ENCODE measurements at regions of chr10 and their contacts with region 1.

Region 1: DNA sequence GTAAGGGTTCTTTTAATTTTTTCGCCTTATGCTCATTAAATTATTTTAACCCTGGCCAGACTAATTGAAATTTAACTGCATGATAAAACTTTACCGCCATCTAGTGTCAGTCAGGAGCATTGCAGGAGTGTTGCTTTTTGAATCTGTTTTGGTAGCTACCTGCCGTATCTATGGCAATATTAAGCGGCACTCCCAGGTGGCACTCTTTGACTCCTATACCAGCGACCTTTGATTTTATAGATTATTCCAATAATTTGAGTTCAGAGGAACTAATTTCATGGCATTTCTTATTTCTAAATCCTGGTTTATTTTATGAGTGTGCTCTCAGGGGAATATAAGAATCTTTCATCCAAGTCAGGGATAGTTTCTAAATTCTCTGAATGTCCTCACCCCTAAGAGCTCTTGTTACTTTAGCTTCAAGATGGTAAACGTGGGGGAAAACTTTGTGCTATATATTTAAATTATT is 198.9 kb downstream of the REEP3 start:
- DNase-seq: peak; percentile 65
- ATAC-seq: peak; percentile 62
- H3K4me3 Mint-ChIP-seq: peak overlapping the region; percentile 12
- H3K27ac Mint-ChIP-seq: no peak overlapping the region
- H3K4me1 Mint-ChIP-seq: peaks cover 16% of the 10 kb centered on the region
- H3K27me3 Mint-ChIP-seq: peaks cover 3% of the 10 kb centered on the region

Region 2: GRCh38 chr10:63157845-63158624 is 562.1 kb before region 1 on chr10:
- CTCF ChIA-PET with region 1: interaction called, 234 read pairs
- POLR2A ChIA-PET with region 1: no interaction called
- DNase-seq: peak; percentile 67
- ATAC-seq: peak; percentile 78
- H3K4me3 Mint-ChIP-seq: no peak overlapping the region
- H3K27ac Mint-ChIP-seq: no peak overlapping the region
- H3K4me1 Mint-ChIP-seq: peaks cover 10% of the 10 kb centered on the region
- H3K27me3 Mint-ChIP-seq: no peaks in the 10 kb centered on the region

Region 3: GRCh38 chr10:63173468-63174232 is 546.5 kb before region 1 on chr10:
- CTCF ChIA-PET with region 1: interaction called, 234 read pairs
- POLR2A ChIA-PET with region 1: no interaction called
- DNase-seq: no peak
- ATAC-seq: peak; percentile 95
- H3K4me3 Mint-ChIP-seq: peak overlapping the region; percentile 43
- H3K27ac Mint-ChIP-seq: peak overlapping the region; percentile 88
- H3K4me1 Mint-ChIP-seq: peaks cover 77% of the 10 kb centered on the region
- H3K27me3 Mint-ChIP-seq: no peaks in the 10 kb centered on the region

Region 4: DNA sequence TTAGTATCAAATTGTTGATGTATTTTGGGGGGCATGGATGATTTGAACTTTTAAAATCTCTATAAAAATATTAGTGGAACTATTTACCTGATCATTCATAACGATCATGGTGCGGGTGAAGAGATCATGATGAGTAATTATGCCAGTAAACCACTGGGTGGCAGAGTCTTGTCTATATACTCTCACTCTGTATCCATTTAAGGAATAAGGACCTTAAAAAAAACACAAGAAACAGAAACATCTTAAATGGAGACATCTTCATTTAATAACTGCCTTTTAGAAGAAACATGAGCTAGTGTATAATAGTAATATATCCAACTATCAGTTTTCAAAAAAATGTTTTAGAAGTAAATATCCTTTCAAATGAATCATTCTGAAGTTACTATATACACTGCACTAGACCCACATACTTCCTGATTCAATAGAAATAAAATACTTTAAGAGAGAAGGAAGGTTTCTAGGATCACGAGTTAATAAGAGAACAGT is 502.9 kb before region 1 on chr10:
- CTCF ChIA-PET with region 1: interaction called, 18 read pairs
- POLR2A ChIA-PET with region 1: no interaction called
- DNase-seq: peak; percentile 46
- ATAC-seq: peak; percentile 81
- H3K4me3 Mint-ChIP-seq: no peak overlapping the region
- H3K27ac Mint-ChIP-seq: no peak overlapping the region
- H3K4me1 Mint-ChIP-seq: peaks cover 45% of the 10 kb centered on the region
- H3K27me3 Mint-ChIP-seq: no peaks in the 10 kb centered on the region

Region 5: DNA sequence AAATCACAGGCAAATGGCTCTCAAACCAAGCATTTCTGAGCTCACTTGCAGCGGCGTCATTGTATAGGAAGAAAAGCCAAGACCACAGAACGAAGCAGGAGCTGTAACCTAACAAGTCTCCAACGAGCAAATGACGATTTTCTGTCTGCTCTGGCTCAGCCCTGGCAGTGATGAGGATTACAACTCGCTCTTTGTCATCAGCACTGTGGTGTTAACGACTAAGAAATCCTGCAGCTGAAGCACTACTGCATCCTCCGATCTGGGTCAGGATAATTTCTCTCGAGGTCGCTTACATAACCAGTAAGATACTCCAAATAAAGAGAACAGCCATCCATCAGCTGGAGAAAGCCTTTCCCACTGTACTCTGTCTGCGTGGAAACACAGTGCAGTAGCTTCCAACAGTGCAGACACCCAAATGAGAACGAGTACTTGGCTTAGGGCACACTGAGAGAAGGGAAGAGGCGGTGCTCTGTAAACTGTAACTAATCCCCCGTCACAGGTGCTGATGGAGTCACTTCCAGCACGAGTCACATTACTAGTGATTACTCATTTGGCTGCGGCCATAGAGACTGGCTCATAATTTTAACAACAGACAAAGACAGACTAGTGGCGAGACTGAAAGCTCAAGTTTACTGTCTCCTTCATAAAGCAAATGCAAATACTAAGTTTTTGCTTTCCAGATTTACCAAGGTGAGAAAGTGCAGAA is 451.2 kb before region 1 on chr10:
- CTCF ChIA-PET with region 1: interaction called, 20 read pairs
- POLR2A ChIA-PET with region 1: interaction called, 5 read pairs
- DNase-seq: peak; percentile 91
- ATAC-seq: peak; percentile 94
- H3K4me3 Mint-ChIP-seq: peak overlapping the region; percentile 97
- H3K27ac Mint-ChIP-seq: peak overlapping the region; percentile 99
- H3K4me1 Mint-ChIP-seq: peaks cover 18% of the 10 kb centered on the region
- H3K27me3 Mint-ChIP-seq: no peaks in the 10 kb centered on the region

Region 6: GRCh38 chr10:63700209-63700613 is 19.9 kb before region 1 on chr10:
- CTCF ChIA-PET with region 1: interaction called, 10 read pairs
- POLR2A ChIA-PET with region 1: no interaction called
- DNase-seq: no peak
- ATAC-seq: no peak
- H3K4me3 Mint-ChIP-seq: no peak overlapping the region
- H3K27ac Mint-ChIP-seq: no peak overlapping the region
- H3K4me1 Mint-ChIP-seq: no peaks in the 10 kb centered on the region
- H3K27me3 Mint-ChIP-seq: no peaks in the 10 kb centered on the region

Measured in activated CD8-positive, alpha-beta T cell treated with anti-CD3 and anti-CD28 coated beads, Interleukin-2, amount 10 ng/mL, durations not matched to agents 7 days and 5 days (primary cell).